ENCODE measurements at regions of chr4 and their contacts with region 1.

Region 1: GRCh38 chr4:76377911-76378310 is 43.0 kb downstream of the CCDC158 start:
- DNase-seq: peak; percentile 61

Region 2: GRCh38 chr4:76179398-76180318 is 198.3 kb before region 1 on chr4:
- CTCF ChIA-PET with region 1: interaction called, 43 read pairs
- POLR2A ChIA-PET with region 1: no interaction called
- DNase-seq: peak; percentile 79

Region 3: GRCh38 chr4:76305971-76306881 is 71.7 kb before region 1 on chr4 and contains the start of gene STBD1:
- CTCF ChIA-PET with region 1: interaction called, 20 read pairs
- POLR2A ChIA-PET with region 1: interaction called, 25 read pairs
- DNase-seq: peak; percentile 74